PC-3 (cell line): ENCODE measurements at regions of chr3 and their contacts with region 1.

Region 1: DNA sequence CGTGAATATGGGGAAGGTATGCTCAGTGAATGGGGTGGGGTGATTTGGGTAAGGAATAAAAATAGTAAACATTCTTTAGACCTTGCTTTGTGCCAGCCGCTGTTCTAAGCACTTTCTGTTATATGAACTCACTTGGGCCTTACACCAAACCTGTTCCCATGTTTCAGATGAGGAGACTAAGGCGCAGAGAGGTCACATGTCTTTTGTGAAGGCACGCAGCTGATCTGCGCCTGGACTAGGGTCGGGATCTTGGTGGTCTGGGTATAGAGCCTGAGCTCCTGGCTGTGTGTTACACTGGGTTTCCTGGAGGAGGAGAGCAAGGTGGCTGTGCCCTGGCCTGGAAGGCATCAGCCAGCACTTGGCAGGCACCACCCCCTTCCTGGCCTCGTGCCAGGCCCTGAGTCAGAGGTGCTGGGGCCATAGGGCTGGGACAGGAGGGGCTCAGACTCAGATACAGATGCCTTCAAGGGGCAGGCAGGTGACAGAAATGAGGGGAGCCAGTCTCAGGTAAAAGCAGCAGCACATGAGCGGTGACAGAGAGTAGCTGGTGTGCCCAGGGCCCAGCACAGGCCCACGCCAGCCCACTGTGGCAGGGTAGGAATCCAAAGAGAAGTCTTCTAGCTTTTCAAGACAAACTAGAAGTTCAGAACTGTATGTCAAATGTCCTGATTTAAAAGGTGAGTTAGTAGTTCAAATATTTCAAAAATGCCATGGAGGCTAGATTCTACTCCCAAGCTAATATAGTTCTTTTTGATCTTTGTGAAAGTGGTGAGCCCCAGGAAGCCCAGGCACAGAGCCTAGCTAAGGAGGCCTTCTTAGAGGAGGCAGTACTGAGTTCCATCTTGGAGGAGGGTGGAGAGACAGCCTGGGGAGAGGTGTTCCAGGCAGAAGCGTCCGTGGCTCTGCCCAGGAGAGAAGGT is 83.1 kb downstream of the DNAJB8 start:
- DNase-seq: peak; percentile 90
- ATAC-seq: peak; percentile 56
- H3K4me3 ChIP-seq: peak overlapping the region; percentile 22; the same call in 1 of the 2 replicates
- H3K27ac ChIP-seq: peak overlapping the region; percentile 51; the same call in 1 of the 2 replicates
- H3K4me1 ChIP-seq: peaks cover 46% of the 10 kb centered on the region
- H3K27me3 ChIP-seq: no peaks in the 10 kb centered on the region
- CTCF ChIP-seq: no peak

Region 2: DNA sequence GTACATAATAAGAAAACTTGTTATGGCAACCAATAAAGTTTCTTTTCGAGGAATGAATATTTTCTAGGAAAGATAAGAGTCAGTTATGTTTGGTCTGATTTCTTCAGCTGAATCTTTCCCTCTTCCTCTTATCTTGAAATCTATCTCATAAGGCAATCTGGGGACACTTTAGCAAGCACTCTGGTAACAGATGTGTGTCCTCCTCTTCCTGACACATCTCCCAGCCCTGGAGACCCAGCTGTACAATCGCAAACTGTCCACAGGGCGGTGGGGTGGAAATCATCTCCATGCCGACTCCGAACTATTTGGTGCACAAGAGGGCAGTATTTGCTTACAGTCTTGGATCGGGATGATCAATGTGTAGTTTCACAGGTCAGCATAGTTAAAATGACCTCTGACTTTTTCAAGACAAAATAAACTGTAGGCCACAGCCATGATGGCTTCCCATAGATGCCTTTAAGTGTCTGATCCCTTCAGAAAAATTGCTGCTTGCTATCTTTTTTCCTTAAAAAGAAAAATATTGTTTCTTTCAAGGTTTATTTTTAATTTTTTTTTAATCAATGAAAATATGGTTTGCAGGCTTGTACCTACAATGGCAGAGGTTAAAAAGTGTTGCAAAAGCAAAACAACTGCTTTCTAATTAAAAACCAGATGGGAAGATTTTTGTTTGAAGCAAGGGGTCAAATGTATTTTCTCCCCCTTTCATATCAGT is 212.6 kb before region 1 on chr3:
- CTCF ChIA-PET with region 1: no interaction called
- POLR2A ChIA-PET with region 1: no interaction called
- intact Hi-C with region 1: loop called (anchors 10 kb)
- DNase-seq: peak; percentile 73
- ATAC-seq: peak; percentile 97
- H3K4me3 ChIP-seq: no peak overlapping the region
- H3K27ac ChIP-seq: no peak overlapping the region
- H3K4me1 ChIP-seq: no peaks in the 10 kb centered on the region
- H3K27me3 ChIP-seq: no peaks in the 10 kb centered on the region
- CTCF ChIP-seq: peak; percentile 79